ENCODE measurements at regions of chr12 and their contacts with region 1.

Region 1: GRCh38 chr12:54368709-54369583 is 4.7 kb upstream of the GPR84 start:
- DNase-seq: peak; percentile 90
- H3K4me3 ChIP-seq: peak overlapping the region; percentile 65
- H3K27ac ChIP-seq: peak overlapping the region; percentile 89
- H3K4me1 ChIP-seq: peaks cover 55% of the 10 kb centered on the region
- H3K27me3 ChIP-seq: no peaks in the 10 kb centered on the region
- CTCF ChIP-seq: peak; percentile 84

Region 2: DNA sequence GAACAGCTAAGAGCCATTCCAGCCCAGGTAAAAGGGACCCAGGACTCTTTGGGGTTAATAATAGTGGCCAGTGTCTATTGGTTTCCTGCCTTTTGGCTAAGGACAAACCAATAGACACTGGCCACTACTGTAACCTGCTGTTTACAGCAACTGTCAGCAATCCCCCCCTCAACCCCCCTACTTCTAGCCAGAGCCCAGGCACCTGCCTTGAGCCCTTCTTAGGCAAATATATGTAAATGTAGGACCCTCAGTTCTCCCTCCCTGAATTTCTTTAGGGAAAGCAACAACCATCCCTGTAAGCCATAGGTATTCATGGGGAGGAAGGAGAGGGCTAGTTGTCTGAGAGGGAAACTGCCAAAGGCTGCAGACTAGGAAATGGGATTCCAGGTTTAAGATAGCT is 293.0 kb before region 1 on chr12:
- intact Hi-C with region 1: no loop called
- DNase-seq: no peak
- H3K4me3 ChIP-seq: no peak overlapping the region
- H3K27ac ChIP-seq: no peak overlapping the region
- H3K4me1 ChIP-seq: no peaks in the 10 kb centered on the region
- H3K27me3 ChIP-seq: peaks cover 96% of the 10 kb centered on the region
- CTCF ChIP-seq: no peak

Region 3: DNA sequence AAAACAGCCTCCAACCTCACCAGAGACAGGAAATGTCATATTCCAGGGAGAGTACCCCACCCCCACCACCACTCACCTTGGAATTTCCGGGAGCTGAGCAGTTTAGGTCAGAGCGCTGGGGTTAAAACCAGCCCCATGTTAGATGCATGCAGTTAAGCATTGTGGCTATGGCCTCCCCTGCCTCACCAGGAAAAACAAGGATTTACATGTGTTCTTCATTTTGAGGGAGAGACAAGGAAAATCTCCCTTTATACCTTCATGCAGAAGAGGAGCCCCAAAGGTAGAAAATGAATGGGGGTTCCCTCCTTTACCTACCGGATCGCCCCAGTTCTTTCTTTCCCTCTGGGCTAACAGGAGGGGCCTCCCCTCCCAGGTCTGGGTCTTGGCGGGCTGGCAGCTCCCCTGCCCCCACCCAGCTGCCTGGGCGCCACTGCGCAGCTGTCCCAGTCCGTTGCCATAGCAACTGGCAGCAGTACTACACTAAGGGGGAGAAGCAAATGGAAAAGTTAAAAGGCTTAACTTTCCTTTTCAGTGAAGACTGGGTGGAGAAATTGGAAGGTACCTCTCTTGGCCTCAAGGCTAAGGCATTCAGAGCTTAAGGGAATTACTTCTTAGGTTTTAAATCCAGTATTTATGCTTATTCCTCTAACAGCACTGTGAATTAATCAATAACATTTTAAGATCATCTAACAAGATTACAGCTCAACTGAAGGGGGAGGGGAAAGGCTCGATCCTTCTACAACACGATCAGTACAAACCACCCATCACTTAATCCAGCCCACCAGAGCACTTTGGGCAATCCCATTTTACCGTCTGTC is 109.5 kb before region 1 on chr12:
- intact Hi-C with region 1: loop called (anchors 10 kb)
- DNase-seq: peak; percentile 60
- H3K4me3 ChIP-seq: peak overlapping the region; percentile 66
- H3K27ac ChIP-seq: peak overlapping the region; percentile 83
- H3K4me1 ChIP-seq: peaks cover 60% of the 10 kb centered on the region
- H3K27me3 ChIP-seq: no peaks in the 10 kb centered on the region
- CTCF ChIP-seq: no peak